Activated CD8-positive, alpha-beta T cell treated with anti-CD3 and anti-CD28 coated beads for 36 hours (primary cell): ENCODE measurements at regions of chr10 and their contacts with region 1.

Region 1: GRCh38 chr10:119725828-119726675 is at the start of gene INPP5F:
- DNase-seq: peak; percentile 99
- ATAC-seq: peak; percentile 98
- H3K4me3 Mint-ChIP-seq: peak within 1 kb of the TSS; percentile 82
- H3K27ac Mint-ChIP-seq: peak within 1 kb of the TSS; percentile 76
- H3K4me1 Mint-ChIP-seq: peaks cover 41% of the 10 kb centered on the region
- H3K27me3 Mint-ChIP-seq: no peaks in the 10 kb centered on the region
- CTCF ChIP-seq: peak; percentile 43
- total RNA-seq, gene INPP5F: 10.7 TPM

Region 2: DNA sequence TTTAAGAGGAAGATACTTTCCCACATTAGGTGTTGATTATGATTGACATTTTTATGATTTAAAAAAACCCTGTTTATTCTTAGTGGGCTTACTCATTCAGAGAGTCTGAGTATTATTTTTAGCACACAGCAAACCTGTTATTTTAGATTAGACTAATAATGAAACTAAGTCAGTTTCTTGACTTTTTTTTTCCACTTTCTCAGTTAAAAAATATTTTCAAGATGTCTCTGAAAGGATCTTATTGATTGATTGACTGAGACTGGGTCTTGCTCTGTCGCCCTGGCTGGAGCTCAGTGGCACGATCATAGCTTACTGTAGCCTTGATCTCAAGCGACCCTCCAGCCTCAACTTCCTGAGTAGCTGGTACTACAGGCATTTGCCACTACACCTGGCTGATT is 20.6 kb before region 1 on chr10:
- CTCF ChIA-PET with region 1: interaction called, 7 read pairs
- POLR2A ChIA-PET with region 1: interaction called, 33 read pairs
- intact Hi-C with region 1: no loop called
- DNase-seq: peak; percentile 26
- ATAC-seq: peak; percentile 53
- H3K4me3 Mint-ChIP-seq: peak overlapping the region; percentile 43
- H3K27ac Mint-ChIP-seq: peak overlapping the region; percentile 97
- H3K4me1 Mint-ChIP-seq: peaks cover 78% of the 10 kb centered on the region
- H3K27me3 Mint-ChIP-seq: no peaks in the 10 kb centered on the region
- CTCF ChIP-seq: no peak

Region 3: GRCh38 chr10:119715628-119716505 is 10.2 kb before region 1 on chr10:
- CTCF ChIA-PET with region 1: interaction called, 3 read pairs
- POLR2A ChIA-PET with region 1: interaction called, 11 read pairs
- intact Hi-C with region 1: no loop called
- DNase-seq: no peak
- ATAC-seq: no peak
- H3K4me3 Mint-ChIP-seq: no peak overlapping the region
- H3K27ac Mint-ChIP-seq: no peak overlapping the region
- H3K4me1 Mint-ChIP-seq: peaks cover 7% of the 10 kb centered on the region
- H3K27me3 Mint-ChIP-seq: no peaks in the 10 kb centered on the region
- CTCF ChIP-seq: no peak

Region 4: GRCh38 chr10:119737827-119738226 is 11.8 kb after region 1 on chr10:
- CTCF ChIA-PET with region 1: interaction called, 13 read pairs
- POLR2A ChIA-PET with region 1: interaction called, 7 read pairs
- intact Hi-C with region 1: no loop called
- DNase-seq: peak; percentile 14
- ATAC-seq: peak; percentile 81
- H3K4me3 Mint-ChIP-seq: no peak overlapping the region
- H3K27ac Mint-ChIP-seq: no peak overlapping the region
- H3K4me1 Mint-ChIP-seq: peaks cover 35% of the 10 kb centered on the region
- H3K27me3 Mint-ChIP-seq: no peaks in the 10 kb centered on the region
- CTCF ChIP-seq: no peak